Activated CD4-positive, alpha-beta memory T cell treated with anti-CD3 and anti-CD28 coated beads for 36 hours (primary cell): ENCODE measurements at regions of chrX and their contacts with region 1.

Region 1: DNA sequence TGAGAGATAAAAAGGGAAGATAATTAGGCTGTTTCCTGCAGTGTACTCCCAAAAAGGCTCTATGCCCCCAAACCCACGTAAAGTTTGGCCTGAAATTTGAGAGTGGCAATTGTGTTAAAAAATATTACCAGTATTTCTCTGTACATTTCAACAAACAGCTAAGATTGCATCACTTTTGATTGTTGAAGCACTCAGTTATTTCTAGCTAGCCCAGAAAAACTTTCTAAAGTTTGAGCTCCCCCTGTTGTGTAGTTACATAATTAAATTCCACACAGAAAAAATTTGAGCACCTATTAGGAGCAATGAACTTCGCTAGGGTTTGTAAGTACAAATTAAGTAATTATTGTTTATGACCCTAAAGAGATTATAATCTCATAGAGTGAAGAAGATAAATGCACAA is 109.4 kb downstream of the DLG3 start:
- DNase-seq: no peak
- H3K4me3 Mint-ChIP-seq: no peak overlapping the region
- H3K27ac Mint-ChIP-seq: no peak overlapping the region
- H3K4me1 Mint-ChIP-seq: peaks cover 12% of the 10 kb centered on the region
- H3K27me3 Mint-ChIP-seq: no peaks in the 10 kb centered on the region

Region 2: GRCh38 chrX:70508296-70508911 is 45.7 kb before region 1 on chrX:
- CTCF ChIA-PET with region 1: no interaction called
- POLR2A ChIA-PET with region 1: no interaction called
- intact Hi-C with region 1: loop called (anchors 5 kb)
- DNase-seq: peak; percentile 51
- H3K4me3 Mint-ChIP-seq: no peak overlapping the region
- H3K27ac Mint-ChIP-seq: peak overlapping the region; percentile 44
- H3K4me1 Mint-ChIP-seq: peaks cover 37% of the 10 kb centered on the region
- H3K27me3 Mint-ChIP-seq: peaks cover 3% of the 10 kb centered on the region